CD4-positive, alpha-beta memory T cell (primary cell): ENCODE measurements at regions of chr12 and their contacts with region 1.

Region 1: DNA sequence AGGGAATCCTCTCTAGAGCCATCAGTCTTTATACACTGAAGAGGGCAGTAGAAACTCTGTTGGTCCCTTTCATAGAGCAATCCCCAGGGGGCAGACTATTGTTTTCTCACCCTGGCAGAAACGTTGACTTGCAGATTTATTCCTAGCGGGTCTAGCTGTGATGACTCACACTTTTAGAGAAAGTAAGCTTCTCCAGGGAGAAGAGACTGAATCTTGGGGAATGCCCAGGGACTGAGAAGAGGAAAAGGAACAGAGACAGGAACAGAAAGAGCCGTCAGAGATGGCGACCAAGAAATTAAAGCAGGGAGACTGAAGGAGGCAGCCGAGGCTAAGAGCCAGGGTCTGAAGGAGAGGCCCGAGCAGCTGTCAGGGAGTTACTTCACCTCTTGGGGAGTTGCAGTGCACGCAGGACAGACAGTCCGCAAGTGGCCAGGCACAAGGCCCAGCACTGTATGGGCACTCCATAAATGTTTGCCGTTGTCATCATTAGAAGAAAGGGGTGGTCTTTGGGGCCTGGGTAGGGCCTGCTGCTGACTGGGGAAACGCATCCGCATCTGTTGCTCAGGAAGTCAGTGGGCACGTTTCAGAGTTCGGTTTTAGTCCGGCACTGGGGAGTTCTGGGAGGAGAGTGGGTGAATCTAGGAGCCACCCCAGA is 13.0 kb downstream of the PLEKHG6 start:
- DNase-seq: peak; percentile 47 to 66 (median 52)
- H3K4me3 ChIP-seq: peak overlapping the region in 1 of 2 donors; percentile 3
- H3K4me3 Mint-ChIP-seq: peak overlapping the region; percentile 76 to 90 (median 82)
- H3K27ac ChIP-seq: no peak overlapping the region
- H3K27ac Mint-ChIP-seq: peak overlapping the region; percentile 80 to 96 (median 94)
- H3K4me1 ChIP-seq: peaks cover 32% of the 10 kb centered on the region
- H3K4me1 Mint-ChIP-seq: peaks cover 26 to 53% (median 34%) of the 10 kb centered on the region in 4 donors
- H3K27me3 ChIP-seq: no peaks in the 10 kb centered on the region
- H3K27me3 Mint-ChIP-seq: no peaks in the 10 kb centered on the region

Region 2: DNA sequence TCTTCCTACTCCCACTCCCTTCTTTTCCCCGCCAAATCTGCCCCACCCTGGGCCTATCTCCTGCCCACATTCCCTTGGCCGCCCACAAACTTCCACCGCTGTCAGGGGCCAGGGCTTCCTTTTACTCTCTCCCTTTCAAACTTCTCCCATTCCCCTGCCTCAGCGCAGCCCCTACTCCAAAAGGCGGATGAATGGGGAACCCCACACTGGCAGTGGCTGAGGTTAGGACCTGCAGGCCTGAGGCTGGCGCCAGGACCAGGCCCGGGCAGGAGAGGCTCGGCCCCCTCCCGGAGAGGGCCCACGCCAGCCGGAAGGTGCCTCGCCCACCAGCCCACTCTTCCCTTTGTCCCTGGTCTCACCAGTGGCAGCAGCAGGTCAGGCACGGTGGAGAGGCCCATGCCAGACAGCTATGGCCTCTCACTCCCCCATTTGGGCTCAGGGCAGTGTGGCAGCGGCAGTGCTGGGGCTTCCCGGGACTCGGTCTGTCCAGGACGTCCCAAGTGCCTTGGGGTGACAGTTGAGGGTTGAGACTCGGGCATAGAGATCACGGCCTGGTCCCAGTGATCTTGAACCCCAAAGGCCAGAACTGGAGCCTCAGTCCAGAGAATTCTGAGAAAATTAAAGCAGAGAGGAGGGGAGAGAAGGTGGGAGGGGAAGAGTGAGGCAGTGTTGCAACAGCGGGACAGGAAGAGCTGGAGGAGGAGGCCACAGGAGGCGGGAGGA is 18.1 kb after region 1 on chr12 and contains the start of gene TNFRSF1A:
- CTCF ChIA-PET with region 1: interaction called, 72 read pairs
- POLR2A ChIA-PET with region 1: interaction called, 11 read pairs
- intact Hi-C with region 1: no loop called
- DNase-seq: peak; percentile 44 to 66 (median 56)
- H3K4me3 ChIP-seq: peak within 1 kb of the TSS; percentile 87 to 97
- H3K4me3 Mint-ChIP-seq: no peak within 1 kb of the TSS
- H3K27ac ChIP-seq: peak within 1 kb of the TSS; percentile 92
- H3K27ac Mint-ChIP-seq: peak within 1 kb of the TSS in 2 of 7 donors; percentile 87 to 97
- H3K4me1 ChIP-seq: peaks cover 74% of the 10 kb centered on the region
- H3K4me1 Mint-ChIP-seq: peaks cover 28 to 40% (median 35%) of the 10 kb centered on the region in 4 donors
- H3K27me3 ChIP-seq: no peaks in the 10 kb centered on the region
- H3K27me3 Mint-ChIP-seq: no peaks in the 10 kb centered on the region
- total RNA-seq, gene TNFRSF1A: 80.7 to 86.7 TPM

Region 3: DNA sequence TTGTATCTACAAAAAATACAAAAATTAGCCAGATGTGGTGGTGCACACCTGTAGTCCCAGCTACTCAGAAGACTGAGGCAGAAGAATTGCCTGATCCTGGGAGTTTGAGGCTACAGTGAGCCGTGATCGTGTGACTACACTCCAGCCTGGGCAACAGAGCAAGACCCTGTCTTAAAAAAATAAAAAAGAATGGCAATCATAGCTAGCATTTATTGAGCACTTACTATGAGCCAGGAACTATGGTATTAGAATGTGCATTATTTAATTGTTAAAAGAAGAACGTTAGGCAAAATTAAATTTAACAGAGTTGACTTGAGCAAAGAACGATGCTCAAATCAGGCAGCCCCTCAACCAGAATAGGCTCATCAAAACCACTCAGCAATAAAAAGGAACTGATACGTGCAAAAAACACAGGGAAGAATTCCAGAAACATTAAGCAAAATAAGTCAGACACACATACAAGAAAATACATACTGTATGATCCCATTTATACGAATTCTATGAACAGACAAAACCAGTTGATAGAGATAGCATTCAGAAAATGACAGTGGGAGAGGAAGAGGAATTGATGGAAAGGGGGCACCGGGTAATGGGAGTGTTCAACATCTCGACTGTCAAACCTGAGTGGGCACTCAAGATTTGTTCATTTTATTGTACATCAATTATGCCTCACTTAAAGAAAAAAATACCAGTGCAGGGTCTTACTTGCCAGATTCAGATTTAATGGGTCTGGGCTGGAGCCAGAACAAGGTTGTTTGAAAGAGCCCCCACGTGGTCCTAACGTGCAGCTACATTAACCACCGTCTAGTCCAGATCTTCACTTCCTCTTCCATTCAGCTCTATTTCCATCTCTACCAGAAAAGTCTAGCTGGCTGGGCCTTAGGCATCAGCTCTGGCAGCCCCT is 43.9 kb after region 1 on chr12:
- CTCF ChIA-PET with region 1: interaction called, 268 read pairs
- POLR2A ChIA-PET with region 1: interaction called, 9 read pairs
- intact Hi-C with region 1: loop called (anchors 1 kb)
- DNase-seq: peak; percentile 36 to 55 (median 48)
- H3K4me3 ChIP-seq: no peak overlapping the region
- H3K4me3 Mint-ChIP-seq: peak overlapping the region in 1 of 8 donors; percentile 5
- H3K27ac ChIP-seq: no peak overlapping the region
- H3K27ac Mint-ChIP-seq: peak overlapping the region in 5 of 7 donors; percentile 30 to 84 (median 79)
- H3K4me1 ChIP-seq: peaks cover 26% of the 10 kb centered on the region
- H3K4me1 Mint-ChIP-seq: peaks cover 8 to 38% (median 13%) of the 10 kb centered on the region in 4 donors
- H3K27me3 ChIP-seq: no peaks in the 10 kb centered on the region
- H3K27me3 Mint-ChIP-seq: no peaks in the 10 kb centered on the region

Region 4: DNA sequence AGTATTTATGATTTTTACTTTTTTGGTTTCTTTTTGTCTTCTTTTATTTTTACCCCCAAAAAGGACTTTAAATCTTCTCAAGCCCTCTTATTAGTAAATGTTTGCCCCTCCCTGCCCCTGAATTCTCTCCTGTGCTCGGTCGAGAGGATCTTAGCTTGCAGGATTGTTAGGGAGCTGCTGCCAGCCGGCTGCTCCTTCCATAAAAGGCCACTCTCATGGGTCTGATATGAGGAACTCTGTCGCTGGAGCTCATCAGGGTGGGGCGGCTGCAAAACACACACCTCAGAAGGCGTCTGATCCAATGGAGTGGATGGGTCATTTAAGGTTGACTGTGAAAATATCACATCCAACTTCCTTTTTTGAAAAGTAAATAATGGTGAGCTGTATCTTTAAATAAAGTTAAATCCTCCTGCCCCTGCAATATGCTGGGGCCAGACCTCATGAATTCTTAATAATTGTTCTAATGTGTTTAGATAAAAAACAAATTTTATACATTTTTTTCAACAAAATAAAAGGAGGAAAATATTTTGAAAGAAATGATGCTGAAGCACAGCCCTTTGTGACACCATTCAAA is 69.1 kb after region 1 on chr12:
- CTCF ChIA-PET with region 1: no interaction called
- POLR2A ChIA-PET with region 1: no interaction called
- intact Hi-C with region 1: no loop called
- DNase-seq: no peak
- H3K4me3 ChIP-seq: no peak overlapping the region
- H3K4me3 Mint-ChIP-seq: no peak overlapping the region
- H3K27ac ChIP-seq: no peak overlapping the region
- H3K27ac Mint-ChIP-seq: no peak overlapping the region
- H3K4me1 ChIP-seq: no peaks in the 10 kb centered on the region
- H3K4me1 Mint-ChIP-seq: no peaks in the 10 kb centered on the region
- H3K27me3 ChIP-seq: no peaks in the 10 kb centered on the region
- H3K27me3 Mint-ChIP-seq: peaks cover 0 to 2% of the 10 kb centered on the region in 2 donors

Region 5: GRCh38 chr12:6423267-6424007 is 100.0 kb after region 1 on chr12:
- CTCF ChIA-PET with region 1: interaction called, 13 read pairs
- POLR2A ChIA-PET with region 1: interaction called, 3 read pairs
- intact Hi-C with region 1: loop called (anchors 1 kb)
- DNase-seq: peak; percentile 83 to 86 (median 85)
- H3K4me3 ChIP-seq: no peak overlapping the region
- H3K4me3 Mint-ChIP-seq: peak overlapping the region in 6 of 8 donors; percentile 12 to 56 (median 31)
- H3K27ac ChIP-seq: peak overlapping the region; percentile 8
- H3K27ac Mint-ChIP-seq: peak overlapping the region; percentile 68 to 90 (median 82)
- H3K4me1 ChIP-seq: peaks cover 42% of the 10 kb centered on the region
- H3K4me1 Mint-ChIP-seq: peaks cover 28 to 38% (median 33%) of the 10 kb centered on the region in 4 donors
- H3K27me3 ChIP-seq: no peaks in the 10 kb centered on the region
- H3K27me3 Mint-ChIP-seq: peaks cover 0 to 6% of the 10 kb centered on the region in 2 donors

Region 6: DNA sequence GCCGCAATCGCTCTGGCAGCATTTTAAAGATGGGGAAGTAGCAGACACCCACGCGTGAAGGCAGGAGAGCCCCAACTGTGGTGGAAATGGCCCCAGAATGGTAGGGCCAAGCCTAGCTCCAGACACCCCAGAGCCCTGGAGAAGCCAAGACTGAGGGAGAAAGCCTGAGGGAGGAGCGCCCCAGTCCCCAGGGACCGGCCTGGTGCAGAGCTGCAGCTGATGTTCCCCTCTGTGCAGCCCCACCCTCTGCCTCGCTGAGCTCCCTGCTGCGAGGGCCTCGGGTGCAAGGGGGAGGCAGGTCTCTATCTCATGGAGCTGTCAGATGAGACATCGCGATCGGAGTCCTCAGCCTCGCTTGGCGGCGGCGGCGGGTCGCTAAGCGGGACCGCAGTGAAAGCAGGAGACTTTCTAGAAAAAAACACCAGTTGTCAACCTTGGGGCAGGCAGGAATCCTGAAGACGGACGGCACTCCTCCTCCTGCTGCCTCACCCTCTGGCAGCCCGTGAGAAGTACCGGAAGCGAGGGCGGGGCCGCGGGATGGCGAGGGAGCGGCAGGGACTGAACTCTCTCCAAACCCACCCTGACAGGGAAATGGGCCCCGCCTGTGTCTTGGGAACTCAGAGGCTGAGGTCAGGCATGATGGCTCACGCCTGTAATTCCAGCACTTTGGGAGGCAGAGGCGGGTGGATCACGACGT is 216.9 kb after region 1 on chr12:
- CTCF ChIA-PET with region 1: interaction called, 10 read pairs
- POLR2A ChIA-PET with region 1: interaction called, 12 read pairs
- intact Hi-C with region 1: loop called (anchors 1 kb)
- DNase-seq: peak; percentile 30 to 63 (median 33)
- H3K4me3 ChIP-seq: peak overlapping the region in 1 of 2 donors; percentile 22
- H3K4me3 Mint-ChIP-seq: peak overlapping the region in 7 of 8 donors; percentile 43 to 87 (median 80)
- H3K27ac ChIP-seq: peak overlapping the region; percentile 37
- H3K27ac Mint-ChIP-seq: peak overlapping the region; percentile 80 to 93 (median 89)
- H3K4me1 ChIP-seq: peaks cover 70% of the 10 kb centered on the region
- H3K4me1 Mint-ChIP-seq: peaks cover 31 to 61% (median 51%) of the 10 kb centered on the region in 4 donors
- H3K27me3 ChIP-seq: no peaks in the 10 kb centered on the region
- H3K27me3 Mint-ChIP-seq: no peaks in the 10 kb centered on the region